Posterior vena cava (tissue), 2 donors: ENCODE measurements at regions of chr6 and their contacts with region 1.

Region 1: GRCh38 chr6:18595774-18596530 is 208.8 kb downstream of the RNF144B start:
- DNase-seq: no peak

Region 2: GRCh38 chr6:18904681-18905080 is 308.7 kb after region 1 on chr6:
- intact Hi-C with region 1: loop called in 1 of 2 experiments (anchors 10 kb)
- DNase-seq: no peak